Activated CD8-positive, alpha-beta memory T cell treated with anti-CD3 and anti-CD28 coated beads, Interleukin-2, amount 10 ng/mL, durations not matched to agents 7 days and 5 days (primary cell): ENCODE measurements at regions of chr12 and their contacts with region 1.

Region 1: DNA sequence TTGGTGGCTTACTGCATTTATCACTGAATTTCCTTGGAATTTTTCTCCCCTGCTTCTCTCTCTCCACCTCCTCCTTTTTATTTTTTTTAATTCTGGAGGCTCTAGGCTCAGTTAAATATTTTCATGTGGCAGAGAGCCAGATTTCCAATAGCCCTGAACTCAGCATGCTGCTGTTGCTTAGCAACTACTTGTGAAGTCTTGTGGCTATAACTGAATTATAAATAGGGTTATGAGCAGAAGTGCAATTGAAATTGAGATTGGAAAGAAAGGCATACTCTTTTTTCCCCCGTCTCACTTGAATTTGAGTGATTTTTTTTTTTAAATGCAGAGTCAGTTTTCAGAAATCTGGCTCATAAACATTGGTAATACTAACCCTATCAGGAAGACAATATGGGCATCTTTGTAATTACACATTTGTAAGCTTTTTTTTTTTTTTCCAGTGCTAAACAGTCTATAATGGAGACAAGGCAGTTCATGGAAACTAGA is 38.3 kb downstream of the ATF7IP start:
- DNase-seq: no peak
- ATAC-seq: peak; percentile 54
- H3K4me3 Mint-ChIP-seq: peak overlapping the region; percentile 76
- H3K27ac Mint-ChIP-seq: peak overlapping the region; percentile 90
- H3K4me1 Mint-ChIP-seq: peaks cover 72% of the 10 kb centered on the region
- H3K27me3 Mint-ChIP-seq: no peaks in the 10 kb centered on the region

Region 2: GRCh38 chr12:14167005-14167628 is 236.6 kb before region 1 on chr12:
- CTCF ChIA-PET with region 1: no interaction called
- DNase-seq: peak; percentile 52
- ATAC-seq: no peak
- H3K4me3 Mint-ChIP-seq: no peak overlapping the region
- H3K27ac Mint-ChIP-seq: no peak overlapping the region
- H3K4me1 Mint-ChIP-seq: peaks cover 2% of the 10 kb centered on the region
- H3K27me3 Mint-ChIP-seq: peaks cover 15% of the 10 kb centered on the region

Region 3: DNA sequence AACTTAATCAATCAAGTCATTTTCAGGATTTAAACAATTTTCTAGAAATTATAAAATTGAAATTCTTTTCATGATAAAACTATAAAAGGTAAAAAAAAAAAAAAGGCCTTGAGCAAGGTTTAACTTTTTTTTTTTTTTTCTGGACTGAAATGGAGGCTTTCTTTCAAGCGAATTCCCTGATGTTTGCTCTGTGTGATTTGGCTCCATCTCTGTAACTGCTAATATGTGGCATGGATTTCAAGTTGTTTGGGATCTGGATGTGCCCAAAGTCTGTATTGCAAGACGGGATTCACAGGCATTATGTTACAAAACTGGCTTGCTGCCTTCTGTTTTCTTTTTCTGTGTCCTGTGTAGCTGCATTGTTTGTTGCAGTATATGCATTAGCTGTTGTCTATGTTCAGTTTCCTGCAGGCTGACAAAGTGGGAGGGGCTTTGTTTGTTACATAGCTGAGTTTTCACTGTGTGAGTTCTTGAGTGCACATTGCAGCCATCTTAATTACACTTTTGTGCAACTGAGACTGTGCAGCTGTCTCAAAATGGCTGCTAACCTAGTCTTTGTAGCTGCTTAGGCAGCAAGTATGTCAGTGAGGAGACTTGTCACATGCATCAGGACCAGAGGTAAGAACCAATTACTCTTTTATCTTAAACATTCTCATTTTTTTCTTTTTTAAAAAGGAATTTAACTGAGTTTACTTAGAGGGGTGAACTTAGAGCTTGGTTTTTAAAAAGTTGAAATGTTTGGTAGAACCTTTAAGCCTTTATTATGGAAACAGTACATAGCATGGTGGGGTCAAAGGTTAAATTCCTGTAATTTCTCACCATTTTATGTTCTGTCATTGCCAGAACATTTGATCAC is 18.7 kb before region 1 on chr12:
- CTCF ChIA-PET with region 1: interaction called, 30 read pairs
- DNase-seq: peak; percentile 90
- ATAC-seq: peak; percentile 96
- H3K4me3 Mint-ChIP-seq: peak overlapping the region; percentile 79
- H3K27ac Mint-ChIP-seq: peak overlapping the region; percentile 98
- H3K4me1 Mint-ChIP-seq: peaks cover 56% of the 10 kb centered on the region
- H3K27me3 Mint-ChIP-seq: no peaks in the 10 kb centered on the region

Region 4: GRCh38 chr12:14417715-14418114 is 14.0 kb after region 1 on chr12:
- CTCF ChIA-PET with region 1: interaction called, 12 read pairs
- DNase-seq: peak; percentile 92
- ATAC-seq: peak; percentile 62
- H3K4me3 Mint-ChIP-seq: peak overlapping the region; percentile 69
- H3K27ac Mint-ChIP-seq: peak overlapping the region; percentile 93
- H3K4me1 Mint-ChIP-seq: peaks cover 57% of the 10 kb centered on the region
- H3K27me3 Mint-ChIP-seq: no peaks in the 10 kb centered on the region

Region 5: DNA sequence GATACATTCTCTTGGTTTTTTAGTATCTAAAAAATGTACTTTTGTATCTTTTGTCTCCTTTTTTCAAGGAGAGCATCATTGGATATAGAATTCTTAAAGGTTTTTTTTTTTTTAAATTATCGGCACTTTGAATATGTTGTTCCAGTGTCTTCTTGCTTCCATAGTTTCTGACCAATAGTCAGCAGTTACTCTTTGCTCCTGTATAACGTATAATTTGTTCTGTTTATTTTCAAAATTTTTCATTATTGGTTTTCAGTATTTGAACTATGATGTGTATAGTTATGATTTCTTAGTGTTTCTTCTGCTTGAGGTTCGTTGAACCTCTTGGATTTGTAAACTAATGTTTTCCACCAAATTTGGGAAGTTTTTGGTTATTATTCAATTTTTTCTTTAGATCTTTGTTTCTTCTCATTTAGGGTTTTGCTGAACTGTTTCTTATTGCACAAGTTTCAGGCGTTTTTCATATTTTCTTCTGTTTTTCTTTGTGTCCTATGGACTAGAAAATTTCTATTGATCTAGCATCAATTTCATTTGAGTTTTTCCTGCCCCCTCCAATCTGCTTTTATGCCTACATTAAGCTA is 70.0 kb after region 1 on chr12:
- CTCF ChIA-PET with region 1: no interaction called
- DNase-seq: no peak
- ATAC-seq: no peak
- H3K4me3 Mint-ChIP-seq: no peak overlapping the region
- H3K27ac Mint-ChIP-seq: no peak overlapping the region
- H3K4me1 Mint-ChIP-seq: peaks cover 3% of the 10 kb centered on the region
- H3K27me3 Mint-ChIP-seq: no peaks in the 10 kb centered on the region